ENCODE measurements at regions of chr17 and their contacts with region 1.

Region 1: GRCh38 chr17:39199820-39200069 is 338 bp upstream of the RPL19 start:
- DNase-seq: peak; percentile 90
- H3K4me3 ChIP-seq: peak overlapping the region; percentile 43
- H3K27ac ChIP-seq: peak overlapping the region; percentile 89
- H3K27me3 ChIP-seq: no peaks in the 10 kb centered on the region
- CTCF ChIP-seq: no peak

Region 2: DNA sequence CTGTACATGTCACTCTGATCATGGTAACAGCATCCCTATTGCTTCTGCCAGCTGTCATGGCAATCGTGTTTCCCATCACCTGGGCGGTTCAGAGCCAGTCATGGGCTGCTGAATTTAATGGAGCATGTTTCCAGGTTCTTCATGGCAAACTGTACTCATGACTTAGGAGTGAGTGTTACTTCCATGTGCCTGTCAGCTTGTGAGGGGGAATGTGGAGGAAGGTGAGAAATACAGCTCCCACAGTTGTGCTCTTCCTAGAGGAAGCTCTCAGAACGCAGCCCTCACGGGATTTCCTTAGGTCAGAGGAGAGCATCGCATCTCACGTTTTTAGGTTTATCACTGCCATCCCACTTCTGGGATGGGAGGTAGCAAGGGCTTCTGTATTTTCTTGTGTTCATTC is 799.5 kb before region 1 on chr17:
- CTCF ChIA-PET with region 1: no interaction called
- POLR2A ChIA-PET with region 1: no interaction called
- DNase-seq: no peak
- H3K4me3 ChIP-seq: no peak overlapping the region
- H3K27ac ChIP-seq: no peak overlapping the region
- H3K27me3 ChIP-seq: no peaks in the 10 kb centered on the region
- CTCF ChIP-seq: no peak

Region 3: DNA sequence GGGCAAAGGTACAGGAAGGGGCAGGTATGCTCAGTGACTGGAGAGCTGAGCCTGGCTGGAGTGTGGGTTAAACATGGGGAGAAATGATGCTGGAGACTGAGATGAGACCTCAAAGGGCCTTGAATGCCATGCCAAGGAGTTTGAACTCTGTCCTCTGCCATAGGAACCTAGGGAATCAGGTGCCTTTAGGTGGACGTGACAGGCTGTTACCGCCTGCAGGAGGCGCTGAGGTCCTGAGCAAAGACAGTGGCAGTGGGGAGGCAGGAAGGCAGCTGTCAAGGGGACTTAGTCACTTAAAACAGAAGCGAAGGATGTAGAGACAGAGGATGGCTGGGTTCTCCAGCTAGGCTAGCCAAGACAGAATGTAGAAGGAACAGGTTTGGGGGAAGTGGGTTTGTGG is 438.1 kb before region 1 on chr17:
- CTCF ChIA-PET with region 1: no interaction called
- POLR2A ChIA-PET with region 1: interaction called, 14 read pairs
- DNase-seq: no peak
- H3K4me3 ChIP-seq: no peak overlapping the region
- H3K27ac ChIP-seq: no peak overlapping the region
- H3K27me3 ChIP-seq: no peaks in the 10 kb centered on the region
- CTCF ChIP-seq: peak; percentile 41

Region 4: DNA sequence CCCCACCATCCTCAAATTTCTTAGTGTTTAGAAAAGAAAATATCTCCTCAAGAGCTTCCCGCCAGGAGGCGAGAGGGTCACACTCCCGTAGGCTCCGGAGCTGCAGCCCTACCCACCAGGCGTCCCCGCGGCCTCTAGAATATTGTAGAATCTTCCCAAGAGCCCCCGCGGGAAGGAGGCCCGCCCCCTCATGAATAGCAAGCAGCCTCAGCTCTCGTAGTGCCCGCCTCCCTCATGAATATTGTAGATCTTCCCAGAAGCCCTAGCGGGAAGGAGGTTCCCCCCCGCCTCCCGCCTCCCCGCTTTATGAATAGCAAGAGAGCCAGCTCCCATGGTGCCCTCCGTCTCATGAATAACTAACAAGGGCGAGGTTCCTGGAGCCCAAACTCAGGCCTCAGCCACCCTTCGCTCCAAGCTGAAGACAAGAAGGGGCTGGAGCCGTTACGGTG is 232.4 kb before region 1 on chr17 and contains the start of gene FBXO47:
- CTCF ChIA-PET with region 1: no interaction called
- POLR2A ChIA-PET with region 1: interaction called, 12 read pairs
- DNase-seq: peak; percentile 51
- H3K4me3 ChIP-seq: peak within 1 kb of the TSS; percentile 20; the same call in 1 of the 2 replicates
- H3K27ac ChIP-seq: peak within 1 kb of the TSS; percentile 31
- H3K27me3 ChIP-seq: no peaks in the 10 kb centered on the region
- CTCF ChIP-seq: peak; percentile 6; the same call in 1 of the 2 replicates
- polyA plus RNA-seq, gene FBXO47: not detected in 2 replicates

Region 5: GRCh38 chr17:39009581-39010001 is 190.2 kb before region 1 on chr17:
- CTCF ChIA-PET with region 1: no interaction called
- POLR2A ChIA-PET with region 1: interaction called, 10 read pairs
- DNase-seq: no peak
- H3K4me3 ChIP-seq: no peak overlapping the region
- H3K27ac ChIP-seq: no peak overlapping the region
- H3K27me3 ChIP-seq: peaks cover 22% of the 10 kb centered on the region
- CTCF ChIP-seq: no peak

Region 6: DNA sequence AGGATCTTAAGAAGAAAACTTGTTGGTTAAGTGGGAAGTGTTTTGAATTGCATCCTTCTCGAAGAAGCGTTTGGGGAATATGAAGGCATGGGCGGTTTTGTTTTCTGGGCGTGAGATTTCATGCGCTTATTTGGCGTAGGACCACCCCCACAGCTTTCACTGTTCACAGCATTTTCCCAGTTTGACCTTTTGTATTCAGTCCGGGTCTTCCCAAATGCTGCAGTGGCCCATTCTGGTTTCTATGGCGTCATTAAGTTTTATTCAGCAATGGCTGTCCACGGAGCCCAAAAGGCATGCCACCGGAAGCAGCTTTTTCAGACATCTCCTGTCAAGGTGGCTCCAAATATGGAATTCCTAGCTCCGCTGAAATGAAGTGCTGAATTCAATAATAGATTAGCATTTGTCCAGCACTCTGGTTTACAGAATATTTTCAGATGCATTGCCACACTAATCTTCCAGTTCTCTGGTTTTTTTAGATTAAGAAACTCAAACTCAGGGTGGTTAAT is 142.0 kb before region 1 on chr17:
- CTCF ChIA-PET with region 1: no interaction called
- POLR2A ChIA-PET with region 1: no interaction called
- DNase-seq: no peak
- H3K4me3 ChIP-seq: no peak overlapping the region
- H3K27ac ChIP-seq: no peak overlapping the region
- H3K27me3 ChIP-seq: peaks cover 9% of the 10 kb centered on the region
- CTCF ChIP-seq: no peak

Region 7: GRCh38 chr17:39144416-39144840 is 55.3 kb before region 1 on chr17:
- CTCF ChIA-PET with region 1: no interaction called
- POLR2A ChIA-PET with region 1: interaction called, 13 read pairs
- DNase-seq: peak; percentile 84
- H3K4me3 ChIP-seq: no peak overlapping the region
- H3K27ac ChIP-seq: peak overlapping the region; percentile 52
- H3K27me3 ChIP-seq: peaks cover under 1% of the 10 kb centered on the region
- CTCF ChIP-seq: no peak

Region 8: DNA sequence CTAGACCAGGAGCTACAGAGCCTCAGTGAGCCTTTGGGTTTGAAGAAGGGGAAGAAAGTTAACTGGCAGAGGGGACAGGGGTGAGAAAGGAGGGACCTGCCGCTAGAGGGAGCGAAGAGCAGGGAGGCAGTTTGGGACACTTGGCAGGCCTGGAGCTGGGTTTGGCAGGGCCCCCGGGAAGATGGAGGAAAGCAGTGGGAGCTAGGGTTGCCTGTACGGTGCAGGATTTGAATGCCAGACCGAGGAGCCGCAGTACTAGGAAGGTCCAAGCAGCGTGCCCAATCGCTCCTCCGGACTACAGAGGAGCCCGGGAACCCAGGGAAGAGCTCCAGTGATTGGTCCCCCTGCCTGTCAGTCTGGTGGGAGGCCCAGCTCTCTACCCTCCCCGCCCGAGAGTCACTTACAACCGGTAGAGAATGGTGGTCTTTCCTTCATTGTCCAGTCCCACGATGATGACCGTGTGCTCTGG is 35.0 kb before region 1 on chr17:
- CTCF ChIA-PET with region 1: interaction called, 9 read pairs
- POLR2A ChIA-PET with region 1: interaction called, 13 read pairs
- DNase-seq: peak; percentile 76
- H3K4me3 ChIP-seq: peak overlapping the region; percentile 63
- H3K27ac ChIP-seq: no peak overlapping the region
- H3K27me3 ChIP-seq: peaks cover 32% of the 10 kb centered on the region
- CTCF ChIP-seq: peak; percentile 87

Region 9: GRCh38 chr17:39225959-39226683 is 26.4 kb after region 1 on chr17:
- CTCF ChIA-PET with region 1: no interaction called
- POLR2A ChIA-PET with region 1: interaction called, 11 read pairs
- DNase-seq: no peak
- H3K4me3 ChIP-seq: peak overlapping the region; percentile 49
- H3K27ac ChIP-seq: no peak overlapping the region
- H3K27me3 ChIP-seq: peaks cover 43% of the 10 kb centered on the region
- CTCF ChIP-seq: no peak

Measured in AG04450 (cell line).